ENCODE measurements at regions of chr6 and their contacts with region 1.

Region 1: DNA sequence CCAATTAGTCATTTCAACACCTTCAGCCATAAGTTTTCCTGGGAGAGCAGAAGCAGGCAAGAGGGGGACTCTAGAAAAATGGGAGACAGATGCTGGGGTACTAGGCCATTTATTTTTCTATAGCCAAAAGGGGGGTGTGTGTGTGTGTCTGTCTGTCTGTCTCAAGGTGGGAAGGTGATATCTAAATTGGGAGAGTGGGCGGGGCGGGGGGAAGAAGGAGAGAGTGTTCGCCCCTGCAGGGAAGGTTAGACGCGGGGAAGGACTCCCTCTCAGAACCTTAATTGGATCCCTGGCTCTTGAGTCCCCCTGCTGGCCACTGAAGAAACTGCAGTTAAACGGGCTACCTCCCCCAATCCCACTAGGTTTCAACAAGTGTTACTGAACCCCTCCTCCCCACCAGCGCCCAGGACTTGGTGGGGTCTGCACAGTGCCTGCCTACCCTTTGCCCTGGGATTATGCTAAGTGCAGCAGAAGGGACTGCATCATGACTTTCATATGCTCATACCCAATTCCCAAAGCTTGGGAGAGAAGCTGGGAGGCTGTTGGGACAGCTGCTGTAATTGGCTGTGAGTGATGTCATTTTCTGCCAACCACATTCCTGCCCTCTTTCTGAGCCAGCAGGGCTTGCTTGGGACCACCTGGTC is 45.8 kb downstream of the FOXP4 start:
- DNase-seq: peak; percentile 64
- H3K4me3 ChIP-seq: no peak overlapping the region
- H3K27ac ChIP-seq: no peak overlapping the region
- H3K4me1 ChIP-seq: no peaks in the 10 kb centered on the region
- H3K27me3 ChIP-seq: no peaks in the 10 kb centered on the region
- CTCF ChIP-seq: peak; percentile 91 to 98 (median 94)
- POLR2A ChIP-seq: no peak

Region 2: GRCh38 chr6:40906759-40907158 is 685.2 kb before region 1 on chr6:
- intact Hi-C with region 1: no loop called
- DNase-seq: no peak
- H3K4me3 ChIP-seq: no peak overlapping the region
- H3K27ac ChIP-seq: no peak overlapping the region
- H3K4me1 ChIP-seq: no peaks in the 10 kb centered on the region
- H3K27me3 ChIP-seq: no peaks in the 10 kb centered on the region
- CTCF ChIP-seq: no peak
- POLR2A ChIP-seq: no peak

Region 3: DNA sequence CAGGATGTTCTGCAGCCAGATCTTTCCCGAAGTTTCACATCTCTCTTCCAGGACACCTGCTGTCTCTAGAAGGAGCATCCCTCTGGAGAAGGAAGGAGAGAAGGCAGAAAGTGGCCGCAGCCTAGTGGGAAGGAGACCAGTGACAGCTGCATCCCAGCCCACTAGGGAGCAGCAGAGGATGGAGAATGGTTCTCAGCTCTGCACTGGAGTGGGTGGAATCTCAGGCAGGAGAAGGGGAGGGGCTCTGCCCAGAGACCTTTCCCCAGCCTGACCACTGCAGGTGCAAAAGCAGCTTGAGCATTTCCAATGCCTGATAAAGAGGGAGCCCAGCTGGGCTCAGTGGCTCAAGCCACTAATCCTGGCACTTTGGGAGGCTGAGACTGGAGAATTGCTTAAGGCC is 224.3 kb before region 1 on chr6:
- intact Hi-C with region 1: loop called (anchors 2 kb)
- DNase-seq: peak; percentile 34
- H3K4me3 ChIP-seq: no peak overlapping the region
- H3K27ac ChIP-seq: no peak overlapping the region
- H3K4me1 ChIP-seq: peaks cover under 1% of the 10 kb centered on the region
- H3K27me3 ChIP-seq: no peaks in the 10 kb centered on the region
- CTCF ChIP-seq: peak in 3 of 4 experiments; percentile 48 to 68 (median 65)
- POLR2A ChIP-seq: no peak

Region 4: GRCh38 chr6:41424370-41425058 is 167.5 kb before region 1 on chr6:
- intact Hi-C with region 1: loop called (anchors 2 kb)
- DNase-seq: peak; percentile 84
- H3K4me3 ChIP-seq: no peak overlapping the region
- H3K27ac ChIP-seq: no peak overlapping the region
- H3K4me1 ChIP-seq: peaks cover 8% of the 10 kb centered on the region
- H3K27me3 ChIP-seq: no peaks in the 10 kb centered on the region
- CTCF ChIP-seq: peak; percentile 60 to 87 (median 81)
- POLR2A ChIP-seq: no peak

Region 5: GRCh38 chr6:41455818-41456217 is 136.2 kb before region 1 on chr6:
- intact Hi-C with region 1: no loop called
- DNase-seq: no peak
- H3K4me3 ChIP-seq: no peak overlapping the region
- H3K27ac ChIP-seq: peak overlapping the region in 1 of 2 donors; percentile 53
- H3K4me1 ChIP-seq: peaks cover 3% of the 10 kb centered on the region
- H3K27me3 ChIP-seq: no peaks in the 10 kb centered on the region
- CTCF ChIP-seq: no peak
- POLR2A ChIP-seq: no peak

Region 6: DNA sequence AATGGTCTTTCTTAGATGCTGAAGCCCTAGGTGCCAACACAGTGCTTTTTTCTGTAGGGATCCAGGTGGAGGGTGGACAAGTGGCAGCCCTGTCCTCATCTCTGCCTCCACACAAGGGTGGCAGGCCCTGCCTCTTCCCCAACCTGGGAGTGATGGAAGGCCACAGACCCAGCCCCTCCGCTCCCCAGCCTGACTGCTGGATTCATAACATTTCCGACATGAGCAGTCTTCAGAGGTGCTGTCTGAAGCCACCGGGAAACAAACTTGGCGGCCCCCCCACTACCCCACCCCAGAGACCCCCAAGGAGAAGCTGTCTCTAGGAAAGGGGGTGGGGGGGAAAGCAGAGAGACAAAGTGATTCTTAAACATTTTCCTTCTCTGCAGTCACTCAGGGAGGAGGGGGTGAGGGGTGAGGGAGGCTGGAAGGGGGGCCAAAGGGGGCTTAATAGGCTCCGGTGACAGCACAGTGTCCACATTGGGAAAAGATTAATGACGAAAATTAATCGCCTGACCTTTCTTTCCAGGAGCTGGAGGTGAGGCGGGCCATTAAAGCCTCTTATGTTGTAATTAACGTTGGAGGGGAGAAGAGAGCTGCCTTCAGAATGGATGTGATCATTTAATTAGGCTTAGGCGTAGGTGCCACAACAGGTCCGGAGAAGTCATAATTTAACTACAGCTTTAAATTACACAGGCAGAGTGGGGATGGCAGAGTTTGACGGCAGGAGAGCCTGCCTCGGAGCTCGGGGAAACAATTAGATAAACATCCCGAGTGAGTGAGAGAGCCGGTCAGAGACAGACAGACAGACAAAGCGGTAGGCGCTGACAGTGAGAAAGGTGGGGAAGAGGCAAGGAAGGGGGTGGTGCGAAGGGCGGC is 122.6 kb before region 1 on chr6:
- intact Hi-C with region 1: loop called (anchors 2 kb)
- DNase-seq: no peak
- H3K4me3 ChIP-seq: peak overlapping the region in 1 of 2 donors; percentile 12
- H3K27ac ChIP-seq: no peak overlapping the region
- H3K4me1 ChIP-seq: no peaks in the 10 kb centered on the region
- H3K27me3 ChIP-seq: no peaks in the 10 kb centered on the region
- CTCF ChIP-seq: no peak
- POLR2A ChIP-seq: no peak

Region 7: DNA sequence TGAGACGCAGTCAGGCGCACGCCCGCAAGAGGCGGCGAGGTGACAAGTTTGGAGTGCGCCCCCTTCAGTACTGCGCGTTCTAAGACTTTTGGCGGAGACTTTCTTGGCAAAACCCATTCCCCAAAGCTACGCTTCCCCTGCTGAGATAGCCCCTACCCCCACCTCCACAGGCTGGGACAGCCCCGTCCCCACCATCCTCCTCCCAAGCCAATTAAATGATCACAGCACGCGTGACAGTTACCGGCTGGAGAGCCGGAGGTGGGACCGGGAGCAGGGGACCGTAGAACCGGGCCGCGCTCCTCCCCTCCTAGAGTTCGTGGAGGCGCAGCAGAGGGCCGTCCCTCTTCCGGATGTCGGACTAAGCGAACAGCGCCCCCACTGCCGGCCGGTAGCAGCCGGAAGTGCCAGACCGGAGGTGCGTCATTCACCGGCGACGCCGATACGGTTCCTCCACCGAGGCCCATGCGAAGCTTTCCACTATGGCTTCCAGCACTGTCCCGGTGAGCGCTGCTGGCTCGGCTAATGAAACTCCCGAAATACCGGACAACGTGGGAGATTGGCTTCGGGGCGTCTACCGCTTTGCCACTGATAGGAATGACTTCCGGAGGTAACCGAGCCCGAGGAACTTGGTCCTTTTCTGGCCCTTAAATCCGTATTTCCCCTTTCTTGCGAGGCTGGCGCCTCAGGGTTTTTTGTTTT is 195.4 kb after region 1 on chr6 and contains the start of gene TOMM6:
- intact Hi-C with region 1: loop called (anchors 10 kb)
- DNase-seq: peak; percentile 95
- H3K4me3 ChIP-seq: peak within 1 kb of the TSS; percentile 57 to 90
- H3K27ac ChIP-seq: peak within 1 kb of the TSS; percentile 92 to 93
- H3K4me1 ChIP-seq: peaks cover 20% of the 10 kb centered on the region
- H3K27me3 ChIP-seq: no peaks in the 10 kb centered on the region
- CTCF ChIP-seq: peak; percentile 90 to 99 (median 94)
- POLR2A ChIP-seq: peak; percentile 82
- total RNA-seq, gene TOMM6: 158 to 233 TPM

Measured in prostate gland (tissue), 2 donors.